ENCODE measurements at regions of chr10 and their contacts with region 1.

Region 1: GRCh38 chr10:73655983-73656285 is at the start of gene SYNPO2L:
- DNase-seq: peak; percentile 85 to 94
- ATAC-seq: peak; percentile 79 to 81
- H3K4me3 ChIP-seq: peak within 1 kb of the TSS; percentile 56 to 76 (median 71)
- H3K27ac ChIP-seq: peak within 1 kb of the TSS; percentile 96 to 99 (median 98)
- H3K4me1 ChIP-seq: peaks cover 50 to 57% of the 10 kb centered on the region in 2 donors
- H3K27me3 ChIP-seq: no peaks in the 10 kb centered on the region
- CTCF ChIP-seq: no peak
- POLR2A ChIP-seq: peak; percentile 93
- total RNA-seq, gene SYNPO2L: 26.8 to 117 (median 46.8) TPM

Region 2: DNA sequence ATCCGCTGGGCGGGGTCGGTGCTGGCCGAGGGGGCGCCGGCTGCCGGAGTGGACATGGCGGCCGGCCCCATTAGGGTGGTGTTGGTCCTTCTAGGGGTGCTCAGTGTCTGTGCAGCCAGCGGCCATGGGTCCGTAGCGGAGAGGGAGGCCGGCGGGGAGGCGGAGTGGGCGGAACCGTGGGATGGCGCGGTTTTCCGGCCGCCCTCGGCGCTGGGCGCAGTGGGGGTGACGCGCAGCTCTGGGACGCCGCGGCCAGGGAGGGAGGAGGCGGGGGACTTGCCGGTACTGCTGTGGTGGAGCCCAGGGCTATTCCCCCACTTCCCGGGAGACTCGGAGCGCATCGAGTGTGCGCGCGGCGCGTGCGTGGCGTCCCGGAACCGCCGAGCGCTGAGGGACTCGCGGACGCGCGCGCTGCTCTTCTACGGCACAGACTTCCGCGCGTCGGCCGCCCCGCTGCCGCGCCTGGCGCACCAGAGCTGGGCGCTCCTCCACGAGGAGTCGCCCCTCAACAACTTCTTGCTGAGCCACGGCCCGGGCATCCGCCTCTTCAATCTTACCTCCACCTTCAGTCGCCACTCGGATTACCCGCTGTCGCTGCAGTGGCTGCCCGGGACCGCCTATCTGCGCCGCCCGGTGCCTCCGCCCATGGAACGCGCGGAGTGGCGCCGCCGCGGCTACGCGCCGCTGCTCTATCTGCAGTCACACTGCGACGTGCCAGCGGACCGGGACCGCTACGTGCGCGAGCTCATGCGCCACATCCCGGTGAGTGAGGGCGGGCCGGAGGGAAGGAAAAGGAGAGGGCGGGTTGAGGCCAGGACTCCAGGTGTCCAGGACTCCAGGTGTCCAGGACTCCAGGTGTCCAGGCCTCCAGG is 116.6 kb after region 1 on chr10:
- in situ Hi-C with region 1: no loop called
- intact Hi-C with region 1: loop called (anchors 1 kb)
- DNase-seq: peak; percentile 72 to 87
- ATAC-seq: peak; percentile 77 to 80
- H3K4me3 ChIP-seq: peak overlapping the region; percentile 81 to 98 (median 89)
- H3K27ac ChIP-seq: peak overlapping the region; percentile 94 to 99 (median 98)
- H3K4me1 ChIP-seq: peaks cover 29 to 33% of the 10 kb centered on the region in 2 donors
- H3K27me3 ChIP-seq: no peaks in the 10 kb centered on the region
- CTCF ChIP-seq: peak in 4 of 5 experiments; percentile 9 to 45 (median 21)
- POLR2A ChIP-seq: peak; percentile 83 to 91

Region 3: GRCh38 chr10:73803680-73804286 is 147.8 kb after region 1 on chr10:
- in situ Hi-C with region 1: no loop called
- intact Hi-C with region 1: no loop called
- DNase-seq: no peak
- ATAC-seq: no peak
- H3K4me3 ChIP-seq: no peak overlapping the region
- H3K27ac ChIP-seq: no peak overlapping the region
- H3K4me1 ChIP-seq: peaks cover 0 to 5% of the 10 kb centered on the region in 2 donors
- H3K27me3 ChIP-seq: no peaks in the 10 kb centered on the region
- CTCF ChIP-seq: no peak
- POLR2A ChIP-seq: no peak

Measured in gastrocnemius medialis (tissue), 4 donors.